B cell (primary cell): ENCODE measurements at regions of chr2 and their contacts with region 1.

Region 1: GRCh38 chr2:233418761-233419625 is 64.7 kb downstream of the DGKD start:
- DNase-seq: peak; percentile 89
- ATAC-seq: peak; percentile 75
- H3K4me3 ChIP-seq: peak overlapping the region; percentile 45 to 77 (median 67)
- H3K4me3 Mint-ChIP-seq: peak overlapping the region; percentile 91
- H3K27ac ChIP-seq: peak overlapping the region; percentile 91 to 92
- H3K27ac Mint-ChIP-seq: peak overlapping the region; percentile 97
- H3K4me1 ChIP-seq: peaks cover 94 to 97% of the 10 kb centered on the region in 2 donors
- H3K4me1 Mint-ChIP-seq: peaks cover 92% of the 10 kb centered on the region
- H3K27me3 ChIP-seq: no peaks in the 10 kb centered on the region
- H3K27me3 Mint-ChIP-seq: no peaks in the 10 kb centered on the region
- CTCF ChIP-seq: no peak

Region 2: GRCh38 chr2:231961349-231962166 is 1457.4 kb before region 1 on chr2 and contains the start of gene DIS3L2:
- CTCF ChIA-PET with region 1: no interaction called
- POLR2A ChIA-PET with region 1: no interaction called
- intact Hi-C with region 1: no loop called
- DNase-seq: peak; percentile 87
- ATAC-seq: peak; percentile 96
- H3K4me3 ChIP-seq: peak within 1 kb of the TSS; percentile 55 to 96 (median 94)
- H3K4me3 Mint-ChIP-seq: peak within 1 kb of the TSS; percentile 92
- H3K27ac ChIP-seq: peak within 1 kb of the TSS; percentile 62 to 77
- H3K27ac Mint-ChIP-seq: peak within 1 kb of the TSS; percentile 94
- H3K4me1 ChIP-seq: peaks cover 5 to 15% of the 10 kb centered on the region in 2 donors
- H3K4me1 Mint-ChIP-seq: peaks cover 33% of the 10 kb centered on the region
- H3K27me3 ChIP-seq: no peaks in the 10 kb centered on the region
- H3K27me3 Mint-ChIP-seq: no peaks in the 10 kb centered on the region
- CTCF ChIP-seq: no peak
- total RNA-seq, gene DIS3L2: 70.1 and 74.3 TPM in 2 replicates

Region 3: GRCh38 chr2:233124421-233125080 is 294.4 kb before region 1 on chr2:
- CTCF ChIA-PET with region 1: no interaction called
- POLR2A ChIA-PET with region 1: no interaction called
- intact Hi-C with region 1: loop called (anchors 5 kb)
- DNase-seq: peak; percentile 93
- ATAC-seq: peak; percentile 98
- H3K4me3 ChIP-seq: peak overlapping the region in 1 of 5 experiments; percentile 24
- H3K4me3 Mint-ChIP-seq: peak overlapping the region; percentile 82
- H3K27ac ChIP-seq: peak overlapping the region; percentile 80 to 97
- H3K27ac Mint-ChIP-seq: peak overlapping the region; percentile 95
- H3K4me1 ChIP-seq: peaks cover 35 to 50% of the 10 kb centered on the region in 2 donors
- H3K4me1 Mint-ChIP-seq: peaks cover 50% of the 10 kb centered on the region
- H3K27me3 ChIP-seq: no peaks in the 10 kb centered on the region
- H3K27me3 Mint-ChIP-seq: no peaks in the 10 kb centered on the region
- CTCF ChIP-seq: no peak

Region 4: DNA sequence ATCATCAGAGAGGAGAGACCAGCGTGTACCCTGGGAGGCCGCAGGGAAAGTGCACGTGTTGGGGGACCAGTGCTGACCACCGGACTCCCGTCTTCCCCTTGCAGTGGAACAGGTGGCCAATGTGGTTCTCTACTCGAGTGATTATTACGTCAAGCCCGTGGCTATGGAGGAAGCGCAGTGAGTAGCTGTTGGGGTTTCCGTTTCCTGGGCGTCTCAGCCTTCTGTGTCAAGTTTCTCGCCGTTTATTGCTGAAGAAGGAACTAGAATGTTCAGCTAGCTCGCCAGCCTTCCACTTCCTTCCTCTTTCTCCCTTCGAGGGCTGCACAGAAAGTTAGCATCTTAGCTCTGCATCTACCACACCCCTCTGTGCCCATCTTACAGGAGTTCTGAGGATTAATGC is 87.5 kb before region 1 on chr2:
- CTCF ChIA-PET with region 1: interaction called, 4 read pairs
- POLR2A ChIA-PET with region 1: interaction called, 4 read pairs
- intact Hi-C with region 1: loop called (anchors 1 kb)
- DNase-seq: peak; percentile 96
- ATAC-seq: peak; percentile 91
- H3K4me3 ChIP-seq: peak overlapping the region in 2 of 5 experiments; percentile 19 to 32
- H3K4me3 Mint-ChIP-seq: peak overlapping the region; percentile 73
- H3K27ac ChIP-seq: peak overlapping the region; percentile 92 to 97
- H3K27ac Mint-ChIP-seq: peak overlapping the region; percentile 94
- H3K4me1 ChIP-seq: peaks cover 66 to 78% of the 10 kb centered on the region in 2 donors
- H3K4me1 Mint-ChIP-seq: peaks cover 79% of the 10 kb centered on the region
- H3K27me3 ChIP-seq: no peaks in the 10 kb centered on the region
- H3K27me3 Mint-ChIP-seq: no peaks in the 10 kb centered on the region
- CTCF ChIP-seq: no peak

Region 5: DNA sequence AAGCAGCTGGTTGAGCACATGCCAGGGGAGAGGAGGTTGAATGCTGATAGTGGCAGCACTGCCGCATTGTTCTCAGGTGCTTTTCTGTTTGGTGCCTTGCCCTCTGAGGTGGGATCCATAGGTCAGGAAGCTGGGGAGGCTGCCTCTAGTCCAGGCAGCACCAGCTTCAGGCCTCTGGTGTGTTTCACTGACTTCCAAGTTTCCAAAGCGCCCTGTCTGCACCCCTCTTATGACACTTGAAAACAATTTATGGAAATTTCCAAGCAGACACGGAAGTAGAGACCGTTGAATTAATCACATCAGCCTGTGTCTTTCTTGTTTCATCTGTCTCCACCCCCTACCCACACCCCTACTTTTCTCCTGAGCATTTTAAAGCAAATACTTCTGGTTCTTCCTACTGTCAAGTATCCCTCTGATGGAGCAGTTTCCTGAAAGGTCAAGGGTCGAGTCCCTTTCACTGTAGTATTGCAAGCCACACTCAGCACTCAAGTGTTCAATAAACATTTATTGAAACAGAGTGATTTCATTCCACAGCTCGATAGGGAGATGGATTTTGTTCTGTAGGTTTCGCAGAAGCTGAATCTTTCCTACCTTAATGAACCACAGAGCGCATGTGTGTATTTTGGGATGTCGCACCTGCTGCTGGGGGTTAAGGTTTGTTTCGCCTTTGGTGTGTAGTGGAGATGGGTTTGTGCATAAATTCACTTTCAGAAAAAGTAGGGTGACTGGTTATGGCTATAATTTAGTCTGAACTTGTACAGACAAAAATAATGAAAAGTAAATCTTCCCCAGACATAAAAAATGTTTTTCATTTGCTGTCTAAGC is 43.3 kb before region 1 on chr2:
- CTCF ChIA-PET with region 1: no interaction called
- POLR2A ChIA-PET with region 1: no interaction called
- intact Hi-C with region 1: no loop called
- DNase-seq: no peak
- ATAC-seq: no peak
- H3K4me3 ChIP-seq: no peak overlapping the region
- H3K4me3 Mint-ChIP-seq: peak overlapping the region; percentile 6
- H3K27ac ChIP-seq: peak overlapping the region in 1 of 2 donors; percentile 12
- H3K27ac Mint-ChIP-seq: peak overlapping the region; percentile 64
- H3K4me1 ChIP-seq: peaks cover 53 to 56% of the 10 kb centered on the region in 2 donors
- H3K4me1 Mint-ChIP-seq: peaks cover 65% of the 10 kb centered on the region
- H3K27me3 ChIP-seq: no peaks in the 10 kb centered on the region
- H3K27me3 Mint-ChIP-seq: no peaks in the 10 kb centered on the region
- CTCF ChIP-seq: no peak

Region 6: GRCh38 chr2:233404222-233404621 is 14.8 kb before region 1 on chr2:
- CTCF ChIA-PET with region 1: interaction called, 218 read pairs
- POLR2A ChIA-PET with region 1: interaction called, 5 read pairs
- intact Hi-C with region 1: loop called (anchors 1 kb)
- DNase-seq: peak; percentile 82
- ATAC-seq: peak; percentile 89
- H3K4me3 ChIP-seq: no peak overlapping the region
- H3K4me3 Mint-ChIP-seq: no peak overlapping the region
- H3K27ac ChIP-seq: peak overlapping the region in 1 of 2 donors; percentile 69
- H3K27ac Mint-ChIP-seq: peak overlapping the region; percentile 82
- H3K4me1 ChIP-seq: peaks cover 25 to 28% of the 10 kb centered on the region in 2 donors
- H3K4me1 Mint-ChIP-seq: peaks cover 46% of the 10 kb centered on the region
- H3K27me3 ChIP-seq: no peaks in the 10 kb centered on the region
- H3K27me3 Mint-ChIP-seq: no peaks in the 10 kb centered on the region
- CTCF ChIP-seq: peak; percentile 88

Region 7: GRCh38 chr2:233430081-233430480 is 11.1 kb after region 1 on chr2:
- CTCF ChIA-PET with region 1: interaction called, 4 read pairs
- POLR2A ChIA-PET with region 1: interaction called, 4 read pairs
- intact Hi-C with region 1: loop called (anchors 2 kb)
- DNase-seq: no peak
- ATAC-seq: no peak
- H3K4me3 ChIP-seq: no peak overlapping the region
- H3K4me3 Mint-ChIP-seq: no peak overlapping the region
- H3K27ac ChIP-seq: peak overlapping the region in 1 of 2 donors; percentile 48
- H3K27ac Mint-ChIP-seq: no peak overlapping the region
- H3K4me1 ChIP-seq: peaks cover 13 to 17% of the 10 kb centered on the region in 2 donors
- H3K4me1 Mint-ChIP-seq: peaks cover 64% of the 10 kb centered on the region
- H3K27me3 ChIP-seq: no peaks in the 10 kb centered on the region
- H3K27me3 Mint-ChIP-seq: no peaks in the 10 kb centered on the region
- CTCF ChIP-seq: no peak

Region 8: GRCh38 chr2:233519787-233520611 is 101.0 kb after region 1 on chr2:
- CTCF ChIA-PET with region 1: no interaction called
- POLR2A ChIA-PET with region 1: no interaction called
- intact Hi-C with region 1: loop called (anchors 1 kb)
- DNase-seq: peak; percentile 56
- ATAC-seq: peak; percentile 83
- H3K4me3 ChIP-seq: peak overlapping the region in 1 of 5 experiments; percentile 58
- H3K4me3 Mint-ChIP-seq: peak overlapping the region; percentile 63
- H3K27ac ChIP-seq: peak overlapping the region; percentile 89 to 94
- H3K27ac Mint-ChIP-seq: peak overlapping the region; percentile 94
- H3K4me1 ChIP-seq: peaks cover 39 to 46% of the 10 kb centered on the region in 2 donors
- H3K4me1 Mint-ChIP-seq: peaks cover 58% of the 10 kb centered on the region
- H3K27me3 ChIP-seq: no peaks in the 10 kb centered on the region
- H3K27me3 Mint-ChIP-seq: no peaks in the 10 kb centered on the region
- CTCF ChIP-seq: no peak

Region 9: GRCh38 chr2:233892793-233893192 is 473.8 kb after region 1 on chr2:
- CTCF ChIA-PET with region 1: no interaction called
- POLR2A ChIA-PET with region 1: no interaction called
- intact Hi-C with region 1: no loop called
- DNase-seq: no peak
- ATAC-seq: no peak
- H3K4me3 ChIP-seq: no peak overlapping the region
- H3K4me3 Mint-ChIP-seq: no peak overlapping the region
- H3K27ac ChIP-seq: no peak overlapping the region
- H3K27ac Mint-ChIP-seq: no peak overlapping the region
- H3K4me1 ChIP-seq: no peaks in the 10 kb centered on the region
- H3K4me1 Mint-ChIP-seq: no peaks in the 10 kb centered on the region
- H3K27me3 ChIP-seq: peaks cover 0 to 12% (median 6%) of the 10 kb centered on the region in 4 experiments
- H3K27me3 Mint-ChIP-seq: peaks cover 59% of the 10 kb centered on the region
- CTCF ChIP-seq: no peak

Region 10: GRCh38 chr2:234269769-234270204 is 850.8 kb after region 1 on chr2:
- CTCF ChIA-PET with region 1: no interaction called
- POLR2A ChIA-PET with region 1: no interaction called
- intact Hi-C with region 1: no loop called
- DNase-seq: no peak
- ATAC-seq: no peak
- H3K4me3 ChIP-seq: no peak overlapping the region
- H3K4me3 Mint-ChIP-seq: no peak overlapping the region
- H3K27ac ChIP-seq: no peak overlapping the region
- H3K27ac Mint-ChIP-seq: no peak overlapping the region
- H3K4me1 ChIP-seq: no peaks in the 10 kb centered on the region
- H3K4me1 Mint-ChIP-seq: no peaks in the 10 kb centered on the region
- H3K27me3 ChIP-seq: peaks cover 0 to 14% (median 8%) of the 10 kb centered on the region in 4 experiments
- H3K27me3 Mint-ChIP-seq: peaks cover 28% of the 10 kb centered on the region
- CTCF ChIP-seq: no peak